BJ (cell line): ENCODE measurements at regions of chr2 and their contacts with region 1.

Region 1: DNA sequence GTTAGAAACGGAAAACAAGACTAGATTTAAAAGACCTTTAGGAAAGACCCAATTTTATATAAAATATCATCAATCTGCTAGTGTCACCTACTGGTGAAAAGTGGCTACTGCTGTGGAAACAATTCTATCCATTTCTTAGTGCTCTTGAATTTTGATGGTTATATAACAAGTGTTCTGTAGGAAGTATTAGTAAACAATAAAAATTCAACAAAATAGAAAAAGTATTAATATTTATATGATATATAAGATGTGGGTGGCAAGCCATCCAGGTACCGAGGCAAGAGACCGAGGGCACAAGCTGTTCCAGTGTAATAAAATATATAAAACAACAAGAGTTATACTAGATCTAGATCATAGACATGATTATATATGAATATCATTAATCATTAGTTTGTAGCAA is 6.2 kb upstream of the TMEM87B start:
- DNase-seq: peak; percentile 19
- H3K4me3 ChIP-seq: no peak overlapping the region
- H3K27me3 ChIP-seq: peaks cover 3% of the 10 kb centered on the region; the same call in 1 of the 2 replicates
- CTCF ChIP-seq: peak; percentile 72

Region 2: DNA sequence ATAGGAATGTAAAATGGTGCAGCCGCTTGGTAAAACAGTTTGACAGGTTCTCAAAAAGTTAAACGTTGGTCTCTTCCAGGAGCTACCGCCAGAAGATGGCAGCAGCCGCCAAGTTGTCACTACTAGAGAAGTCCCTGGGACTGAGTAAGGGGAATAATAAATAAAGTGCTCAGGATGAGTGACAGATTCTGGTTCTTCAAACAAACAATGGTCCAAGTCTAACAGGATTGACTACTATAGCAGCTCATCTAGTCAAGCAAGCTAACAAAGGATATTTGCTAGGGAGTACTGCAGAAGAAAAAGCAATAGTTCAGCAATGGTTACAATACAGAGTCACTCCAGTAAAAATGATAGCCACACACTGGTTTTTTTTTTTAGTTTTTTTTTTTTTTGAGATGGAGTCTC is 161.1 kb before region 1 on chr2:
- CTCF ChIA-PET with region 1: interaction called, 49 read pairs
- POLR2A ChIA-PET with region 1: no interaction called
- DNase-seq: no peak
- H3K4me3 ChIP-seq: no peak overlapping the region
- H3K27me3 ChIP-seq: no peaks in the 10 kb centered on the region
- CTCF ChIP-seq: peak; percentile 71

Region 3: GRCh38 chr2:111896576-111896975 is 152.3 kb before region 1 on chr2:
- CTCF ChIA-PET with region 1: interaction called, 26 read pairs
- POLR2A ChIA-PET with region 1: no interaction called
- DNase-seq: no peak
- H3K4me3 ChIP-seq: no peak overlapping the region
- H3K27me3 ChIP-seq: peaks cover 16% of the 10 kb centered on the region
- CTCF ChIP-seq: no peak